ENCODE measurements at regions of chr2 and their contacts with region 1.

Region 1: GRCh38 chr2:41869542-41870264 is 178.1 kb upstream of the PKDCC start:
- DNase-seq: peak in 5 of 6 donors; percentile 44 to 89 (median 70)
- ATAC-seq: peak; percentile 89 to 95 (median 94)
- H3K4me3 ChIP-seq: no peak overlapping the region
- H3K27ac ChIP-seq: no peak overlapping the region
- H3K4me1 ChIP-seq: no peaks in the 10 kb centered on the region
- H3K27me3 ChIP-seq: no peaks in the 10 kb centered on the region
- CTCF ChIP-seq: peak; percentile 70 to 83 (median 76)

Region 2: GRCh38 chr2:42086500-42086953 is 216.8 kb after region 1 on chr2:
- intact Hi-C with region 1: loop called (anchors 5 kb)
- DNase-seq: peak in 3 of 6 donors; percentile 38 to 65 (median 60)
- ATAC-seq: peak; percentile 72 to 87 (median 86)
- H3K4me3 ChIP-seq: no peak overlapping the region
- H3K27ac ChIP-seq: no peak overlapping the region
- H3K4me1 ChIP-seq: peaks cover 0 to under 1% (median 0%) of the 10 kb centered on the region in 3 donors
- H3K27me3 ChIP-seq: no peaks in the 10 kb centered on the region
- CTCF ChIP-seq: peak; percentile 34 to 62 (median 50)

Region 3: DNA sequence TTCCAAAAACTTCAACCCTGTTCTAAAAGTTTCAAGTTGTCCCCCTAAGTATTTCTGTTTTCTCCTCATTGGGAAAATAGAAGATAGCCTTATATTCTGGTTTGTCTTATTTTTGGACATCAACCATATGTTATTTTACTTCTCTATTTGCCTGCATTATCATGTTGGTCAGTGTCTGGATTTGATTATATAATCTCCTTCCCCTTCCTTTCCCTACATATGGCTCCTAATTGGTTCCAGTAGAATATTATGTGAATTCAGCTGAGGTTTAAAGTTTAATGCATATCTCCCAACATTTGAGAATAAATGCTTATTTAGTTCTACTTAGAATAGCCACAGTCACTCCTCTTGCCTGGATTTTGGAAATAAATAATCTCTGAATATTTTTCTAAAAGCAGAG is 827.3 kb after region 1 on chr2:
- intact Hi-C with region 1: no loop called
- DNase-seq: no peak
- ATAC-seq: no peak
- H3K4me3 ChIP-seq: no peak overlapping the region
- H3K27ac ChIP-seq: no peak overlapping the region
- H3K4me1 ChIP-seq: no peaks in the 10 kb centered on the region
- H3K27me3 ChIP-seq: no peaks in the 10 kb centered on the region
- CTCF ChIP-seq: no peak

Measured in pancreas (tissue), 10 donors.